ENCODE measurements at regions of chr9 and their contacts with region 1.

Region 1: GRCh38 chr9:98916660-98917059 is 27.0 kb upstream of the COL15A1 start:
- DNase-seq: peak; percentile 88
- H3K4me3 ChIP-seq: no peak overlapping the region
- H3K27ac ChIP-seq: peak overlapping the region in 2 of 4 donors; percentile 41 to 59
- H3K4me1 ChIP-seq: peaks cover 0 to 26% (median 15%) of the 10 kb centered on the region in 4 donors
- H3K27me3 ChIP-seq: no peaks in the 10 kb centered on the region
- CTCF ChIP-seq: no peak
- EP300 ChIP-seq: no peak
- POLR2A ChIP-seq: no peak

Region 2: DNA sequence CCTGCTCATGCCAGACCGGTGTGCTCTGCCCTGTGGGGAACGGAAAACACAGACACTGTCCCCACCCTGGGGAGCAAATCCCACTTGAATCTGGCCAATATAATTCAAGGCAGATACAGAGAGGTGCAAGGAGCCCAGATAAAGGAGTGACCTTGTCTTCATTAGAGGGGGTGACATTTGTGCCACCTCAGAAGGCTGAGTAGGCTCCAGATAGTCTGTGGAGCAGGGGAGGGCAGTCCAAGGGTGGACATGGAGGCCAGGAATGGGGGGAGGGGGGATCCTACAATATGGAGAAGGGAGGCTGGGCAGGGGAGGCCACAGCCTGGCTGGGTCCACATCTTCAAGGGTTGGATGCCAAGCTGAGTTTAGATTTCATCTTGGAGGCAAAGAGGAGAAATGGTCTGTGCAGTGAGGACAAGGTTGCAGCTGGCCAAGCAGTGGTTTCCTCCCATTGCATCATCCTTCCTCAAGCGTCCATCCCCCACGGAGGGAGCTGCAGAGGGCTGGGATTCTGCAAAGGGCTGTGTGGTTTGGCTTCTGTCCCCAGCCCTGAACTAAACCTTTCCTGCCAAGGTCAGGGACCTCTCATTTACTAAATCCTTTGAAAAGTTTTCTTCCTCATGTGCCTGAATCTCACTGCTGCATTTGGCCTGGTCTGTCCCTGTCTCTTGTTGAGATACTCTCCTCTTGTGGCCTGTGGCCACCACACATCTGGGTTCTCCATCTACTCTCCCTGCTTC is 49.1 kb before region 1 on chr9:
- intact Hi-C with region 1: loop called (anchors 5 kb)
- DNase-seq: peak; percentile 93
- H3K4me3 ChIP-seq: no peak overlapping the region
- H3K27ac ChIP-seq: peak overlapping the region; percentile 39 to 65 (median 56)
- H3K4me1 ChIP-seq: peaks cover 0 to 32% (median 19%) of the 10 kb centered on the region in 4 donors
- H3K27me3 ChIP-seq: no peaks in the 10 kb centered on the region
- CTCF ChIP-seq: no peak
- EP300 ChIP-seq: no peak
- POLR2A ChIP-seq: no peak

Region 3: GRCh38 chr9:98929866-98930265 is 13.2 kb after region 1 on chr9:
- intact Hi-C with region 1: no loop called
- DNase-seq: no peak
- H3K4me3 ChIP-seq: no peak overlapping the region
- H3K27ac ChIP-seq: no peak overlapping the region
- H3K4me1 ChIP-seq: no peaks in the 10 kb centered on the region
- H3K27me3 ChIP-seq: no peaks in the 10 kb centered on the region
- CTCF ChIP-seq: no peak
- EP300 ChIP-seq: no peak
- POLR2A ChIP-seq: no peak

Region 4: DNA sequence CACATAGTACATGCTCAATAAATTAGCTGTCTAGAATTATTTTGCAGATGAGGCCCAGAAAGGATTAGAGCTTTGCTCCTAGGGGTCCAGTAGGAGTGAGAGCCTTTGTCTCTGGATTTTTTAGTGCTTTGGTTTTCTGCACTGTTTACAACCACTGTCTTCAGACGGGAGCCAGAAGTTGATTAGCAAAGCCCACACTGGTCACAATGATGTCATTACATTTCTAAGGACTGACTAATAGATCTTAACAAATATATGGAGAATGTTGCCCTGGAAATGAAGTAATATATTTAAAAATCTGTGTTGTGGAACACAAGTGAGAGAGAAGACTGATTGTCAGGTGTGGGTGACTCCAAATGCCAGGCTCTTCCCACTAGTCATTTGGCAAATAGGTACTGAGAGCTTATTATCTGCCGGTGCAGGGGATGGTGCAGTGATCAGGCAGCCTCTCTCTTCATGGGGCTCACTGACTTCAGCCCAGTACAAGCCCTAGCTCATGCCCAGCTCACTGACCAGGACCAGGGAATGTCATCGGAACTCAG is 103.2 kb after region 1 on chr9:
- intact Hi-C with region 1: no loop called
- DNase-seq: no peak
- H3K4me3 ChIP-seq: no peak overlapping the region
- H3K27ac ChIP-seq: peak overlapping the region; percentile 24 to 78 (median 68)
- H3K4me1 ChIP-seq: peaks cover 0 to 29% (median 18%) of the 10 kb centered on the region in 4 donors
- H3K27me3 ChIP-seq: no peaks in the 10 kb centered on the region
- CTCF ChIP-seq: no peak
- EP300 ChIP-seq: peak in 1 of 4 donors; percentile 45
- POLR2A ChIP-seq: no peak